Naive thymus-derived CD4-positive, alpha-beta T cell (primary cell): ENCODE measurements at regions of chr19 and their contacts with region 1.

Region 1: DNA sequence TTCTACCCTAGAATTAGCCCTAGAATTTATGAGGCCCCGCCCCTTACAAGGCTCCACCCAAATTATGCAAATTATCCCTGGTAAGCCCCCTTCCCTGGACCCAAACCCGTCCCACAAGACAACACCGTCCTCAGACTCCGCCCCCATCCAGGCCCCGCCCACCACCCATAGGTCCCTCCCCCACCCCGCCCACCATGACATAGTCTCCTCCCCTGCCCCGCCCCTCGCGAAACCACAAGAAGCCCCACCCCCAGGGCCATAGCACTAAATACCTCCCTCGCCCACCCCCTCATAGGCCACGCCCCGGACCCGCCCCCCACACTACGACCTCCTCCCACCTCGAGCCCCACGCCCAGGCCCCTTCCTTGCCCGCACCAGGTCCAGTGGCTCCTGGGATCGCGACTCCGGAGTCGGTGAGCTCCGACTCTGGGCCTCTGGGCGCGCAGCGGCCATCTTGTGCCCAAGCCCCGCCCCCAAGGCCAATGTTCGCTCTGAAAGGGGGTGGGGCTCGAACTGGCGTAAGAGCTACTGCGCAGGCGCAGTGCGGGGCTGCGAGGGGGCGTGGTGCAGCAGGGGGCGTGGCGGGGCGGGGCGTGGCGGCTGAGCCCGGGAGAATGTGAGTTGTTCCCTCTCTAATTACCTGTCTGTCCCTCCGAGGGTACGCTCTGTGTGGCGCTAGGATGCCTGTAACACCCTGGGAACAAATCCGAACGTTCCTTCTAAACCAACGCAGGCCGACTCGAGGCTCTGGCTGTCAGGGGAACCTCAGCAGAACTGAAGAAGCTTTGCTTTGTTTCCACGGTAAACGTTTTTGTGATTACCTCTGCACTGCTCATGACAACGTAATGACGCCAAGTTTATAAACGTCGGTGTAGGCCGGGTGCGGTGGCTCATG is at the start of gene ZNF784:
- DNase-seq: peak; percentile 89 to 99 (median 95)
- ATAC-seq: peak; percentile 90
- H3K4me3 ChIP-seq: peak within 1 kb of the TSS; percentile 76
- H3K4me3 Mint-ChIP-seq: peak within 1 kb of the TSS; percentile 78 to 96 (median 90)
- H3K27ac ChIP-seq: peak within 1 kb of the TSS; percentile 100
- H3K27ac Mint-ChIP-seq: peak within 1 kb of the TSS; percentile 89 to 99 (median 98)
- H3K4me1 ChIP-seq: peaks cover 27 to 46% of the 10 kb centered on the region in 2 donors
- H3K4me1 Mint-ChIP-seq: peaks cover 26 to 65% (median 58%) of the 10 kb centered on the region in 7 donors
- H3K27me3 ChIP-seq: no peaks in the 10 kb centered on the region
- H3K27me3 Mint-ChIP-seq: peaks cover 0 to 18% (median 0%) of the 10 kb centered on the region in 5 donors
- total RNA-seq, gene ZNF784: 5.1 to 17.1 (median 9.0) TPM

Region 2: GRCh38 chr19:55166530-55167268 is 457.7 kb before region 1 on chr19 and contains the start of gene DNAAF3:
- CTCF ChIA-PET with region 1: no interaction called
- POLR2A ChIA-PET with region 1: interaction called, 3 read pairs
- intact Hi-C with region 1: loop called in 1 of 2 experiments (anchors 10 kb)
- DNase-seq: peak in 8 of 9 donors; percentile 37 to 82 (median 60)
- ATAC-seq: peak; percentile 92
- H3K4me3 ChIP-seq: no peak within 1 kb of the TSS
- H3K4me3 Mint-ChIP-seq: peak within 1 kb of the TSS; percentile 41 to 89 (median 70)
- H3K27ac ChIP-seq: no peak within 1 kb of the TSS
- H3K27ac Mint-ChIP-seq: peak within 1 kb of the TSS in 6 of 9 donors; percentile 32 to 88 (median 70)
- H3K4me1 ChIP-seq: peaks cover 0 to 7% of the 10 kb centered on the region in 2 donors
- H3K4me1 Mint-ChIP-seq: peaks cover 10 to 17% (median 13%) of the 10 kb centered on the region in 7 donors
- H3K27me3 ChIP-seq: peaks cover 4 to 26% of the 10 kb centered on the region in 2 donors
- H3K27me3 Mint-ChIP-seq: peaks cover 61 to 70% (median 66%) of the 10 kb centered on the region in 5 donors
- total RNA-seq, gene DNAAF3: not detected

Region 3: GRCh38 chr19:55265723-55266386 is 358.5 kb before region 1 on chr19:
- CTCF ChIA-PET with region 1: no interaction called
- POLR2A ChIA-PET with region 1: no interaction called
- intact Hi-C with region 1: no loop called
- DNase-seq: no peak
- ATAC-seq: no peak
- H3K4me3 ChIP-seq: no peak overlapping the region
- H3K4me3 Mint-ChIP-seq: no peak overlapping the region
- H3K27ac ChIP-seq: no peak overlapping the region
- H3K27ac Mint-ChIP-seq: peak overlapping the region in 1 of 9 donors; percentile 84
- H3K4me1 ChIP-seq: no peaks in the 10 kb centered on the region
- H3K4me1 Mint-ChIP-seq: peaks cover 0 to 10% (median 7%) of the 10 kb centered on the region in 7 donors
- H3K27me3 ChIP-seq: no peaks in the 10 kb centered on the region
- H3K27me3 Mint-ChIP-seq: no peaks in the 10 kb centered on the region

Region 4: GRCh38 chr19:55407800-55408532 is 216.4 kb before region 1 on chr19:
- CTCF ChIA-PET with region 1: no interaction called
- POLR2A ChIA-PET with region 1: no interaction called
- intact Hi-C with region 1: loop called in 1 of 2 experiments (anchors 2 kb)
- DNase-seq: peak; percentile 94 to 99 (median 97)
- ATAC-seq: peak; percentile 93
- H3K4me3 ChIP-seq: peak overlapping the region; percentile 89
- H3K4me3 Mint-ChIP-seq: peak overlapping the region; percentile 86 to 97 (median 92)
- H3K27ac ChIP-seq: peak overlapping the region; percentile 96
- H3K27ac Mint-ChIP-seq: peak overlapping the region; percentile 93 to 100 (median 99)
- H3K4me1 ChIP-seq: peaks cover 17 to 24% of the 10 kb centered on the region in 2 donors
- H3K4me1 Mint-ChIP-seq: peaks cover 21 to 36% (median 26%) of the 10 kb centered on the region in 7 donors
- H3K27me3 ChIP-seq: no peaks in the 10 kb centered on the region
- H3K27me3 Mint-ChIP-seq: peaks cover 0 to 12% (median 0%) of the 10 kb centered on the region in 5 donors

Region 5: DNA sequence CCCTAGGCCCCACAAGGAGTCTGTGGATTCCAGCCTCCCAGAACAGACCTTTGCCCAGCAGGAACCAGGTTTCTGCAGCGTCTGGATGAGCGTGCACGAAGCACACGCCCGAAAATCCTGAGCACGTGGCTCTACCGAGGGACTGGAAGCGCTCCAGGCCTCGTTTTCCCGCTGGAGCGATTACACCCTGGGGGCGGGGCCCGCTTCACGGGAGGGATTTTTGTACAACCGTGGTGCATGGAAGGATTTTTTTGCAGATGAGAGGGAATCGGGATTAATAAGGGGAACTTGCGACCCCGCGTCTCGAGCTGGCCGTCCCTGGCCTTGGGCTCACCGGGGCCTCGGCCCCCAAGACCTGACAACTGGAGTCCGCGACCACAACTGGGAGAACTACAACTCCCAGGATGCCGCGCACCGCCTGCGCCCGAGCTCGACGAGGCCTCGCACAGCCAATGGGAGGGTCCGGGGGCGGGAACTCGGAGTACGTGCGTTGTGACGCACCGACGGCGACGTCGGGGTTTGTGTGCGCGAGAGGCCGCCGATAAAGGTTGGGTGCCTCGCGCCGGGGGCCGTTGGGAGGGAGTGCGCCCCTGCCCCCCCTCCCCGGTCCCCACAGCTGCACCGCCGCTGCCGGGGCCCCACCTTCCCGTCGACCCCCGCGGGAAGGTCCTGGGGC is 148.1 kb before region 1 on chr19 and contains the start of gene ZNF628:
- CTCF ChIA-PET with region 1: no interaction called
- POLR2A ChIA-PET with region 1: interaction called, 17 read pairs
- intact Hi-C with region 1: loop called (anchors 1 to 2 kb)
- DNase-seq: peak; percentile 88 to 98 (median 96)
- ATAC-seq: peak; percentile 96
- H3K4me3 ChIP-seq: peak within 1 kb of the TSS; percentile 96
- H3K4me3 Mint-ChIP-seq: peak within 1 kb of the TSS; percentile 83 to 93 (median 90)
- H3K27ac ChIP-seq: peak within 1 kb of the TSS; percentile 90
- H3K27ac Mint-ChIP-seq: peak within 1 kb of the TSS; percentile 81 to 95 (median 92)
- H3K4me1 ChIP-seq: peaks cover 14 to 15% of the 10 kb centered on the region in 2 donors
- H3K4me1 Mint-ChIP-seq: peaks cover 15 to 41% (median 29%) of the 10 kb centered on the region in 7 donors
- H3K27me3 ChIP-seq: no peaks in the 10 kb centered on the region
- H3K27me3 Mint-ChIP-seq: no peaks in the 10 kb centered on the region
- total RNA-seq, gene ZNF628: 6.6 to 27.2 (median 9.0) TPM

Region 6: GRCh38 chr19:55580628-55581144 is 43.7 kb before region 1 on chr19 and contains the start of gene ZNF579:
- CTCF ChIA-PET with region 1: interaction called, 3 read pairs
- POLR2A ChIA-PET with region 1: interaction called, 9 read pairs
- intact Hi-C with region 1: loop called in 1 of 2 experiments (anchors 2 kb)
- DNase-seq: peak in 8 of 9 donors; percentile 50 to 82 (median 64)
- ATAC-seq: peak; percentile 86
- H3K4me3 ChIP-seq: peak within 1 kb of the TSS; percentile 82
- H3K4me3 Mint-ChIP-seq: peak within 1 kb of the TSS; percentile 85 to 92 (median 88)
- H3K27ac ChIP-seq: peak within 1 kb of the TSS; percentile 87
- H3K27ac Mint-ChIP-seq: peak within 1 kb of the TSS; percentile 76 to 96 (median 88)
- H3K4me1 ChIP-seq: peaks cover 8 to 16% of the 10 kb centered on the region in 2 donors
- H3K4me1 Mint-ChIP-seq: peaks cover 21 to 35% (median 29%) of the 10 kb centered on the region in 7 donors
- H3K27me3 ChIP-seq: no peaks in the 10 kb centered on the region
- H3K27me3 Mint-ChIP-seq: peaks cover 0 to 16% (median 0%) of the 10 kb centered on the region in 5 donors
- total RNA-seq, gene ZNF579: 6.1 to 11.0 (median 7.8) TPM

Region 7: GRCh38 chr19:55605207-55605636 is 19.1 kb before region 1 on chr19:
- CTCF ChIA-PET with region 1: interaction called, 42 read pairs
- POLR2A ChIA-PET with region 1: interaction called, 76 read pairs
- intact Hi-C with region 1: loop called (anchors 1 kb)
- DNase-seq: peak; percentile 90 to 99 (median 97)
- ATAC-seq: peak; percentile 87
- H3K4me3 ChIP-seq: peak overlapping the region; percentile 51
- H3K4me3 Mint-ChIP-seq: peak overlapping the region; percentile 78 to 98 (median 90)
- H3K27ac ChIP-seq: peak overlapping the region; percentile 90
- H3K27ac Mint-ChIP-seq: peak overlapping the region; percentile 77 to 96 (median 91)
- H3K4me1 ChIP-seq: peaks cover 7 to 18% of the 10 kb centered on the region in 2 donors
- H3K4me1 Mint-ChIP-seq: peaks cover 37 to 70% (median 64%) of the 10 kb centered on the region in 7 donors
- H3K27me3 ChIP-seq: no peaks in the 10 kb centered on the region
- H3K27me3 Mint-ChIP-seq: peaks cover 0 to 3% (median 0%) of the 10 kb centered on the region in 5 donors

Region 8: DNA sequence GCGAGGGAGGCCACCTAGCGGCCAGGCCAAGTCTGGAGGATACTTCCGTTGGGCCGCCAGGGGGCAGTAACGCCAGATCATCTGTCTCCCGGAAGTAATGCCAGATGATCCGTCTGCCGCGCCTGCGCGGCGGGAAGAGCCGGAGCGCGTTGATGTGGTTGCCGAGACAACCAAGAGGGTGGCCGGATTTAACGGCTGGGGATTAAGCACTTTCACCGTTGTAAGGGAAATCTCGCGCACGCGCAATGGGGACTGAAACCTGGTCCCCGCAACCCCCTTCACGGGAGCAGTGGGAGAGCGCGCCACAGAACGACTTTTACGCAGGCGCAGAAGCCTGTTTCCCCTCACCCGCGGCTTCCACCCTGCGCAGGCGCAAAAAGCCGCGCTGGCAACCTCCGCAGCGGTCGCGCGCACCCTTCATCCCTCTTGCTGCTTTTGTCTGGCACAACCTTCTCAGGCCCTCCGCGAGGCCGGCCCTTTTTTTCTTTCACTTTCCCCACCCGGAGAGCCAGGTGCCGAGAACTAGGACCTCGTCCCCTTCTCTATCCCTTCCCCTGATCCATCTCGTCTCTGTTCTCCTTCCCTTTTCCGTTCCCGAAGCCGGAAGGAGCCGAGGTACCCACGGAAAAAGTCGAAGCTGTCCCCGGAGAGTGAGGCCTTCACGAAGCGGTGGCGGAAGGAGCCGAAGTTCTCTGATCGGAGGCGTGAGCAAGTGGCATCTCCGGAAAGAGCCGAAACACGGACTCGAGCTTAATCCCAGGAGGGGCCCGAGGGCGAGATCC is 29.6 kb after region 1 on chr19:
- CTCF ChIA-PET with region 1: interaction called, 8 read pairs
- POLR2A ChIA-PET with region 1: interaction called, 12 read pairs
- intact Hi-C with region 1: loop called (anchors 1 to 2 kb)
- DNase-seq: peak; percentile 95 to 100 (median 100)
- ATAC-seq: peak; percentile 83
- H3K4me3 ChIP-seq: peak overlapping the region; percentile 98
- H3K4me3 Mint-ChIP-seq: peak overlapping the region; percentile 83 to 99 (median 96)
- H3K27ac ChIP-seq: peak overlapping the region; percentile 99
- H3K27ac Mint-ChIP-seq: peak overlapping the region; percentile 95 to 100 (median 99)
- H3K4me1 ChIP-seq: peaks cover 30 to 36% of the 10 kb centered on the region in 2 donors
- H3K4me1 Mint-ChIP-seq: peaks cover 29 to 55% (median 39%) of the 10 kb centered on the region in 7 donors
- H3K27me3 ChIP-seq: no peaks in the 10 kb centered on the region
- H3K27me3 Mint-ChIP-seq: peaks cover 0 to 2% (median 0%) of the 10 kb centered on the region in 5 donors

Region 9: GRCh38 chr19:55663846-55664536 is 39.6 kb after region 1 on chr19:
- CTCF ChIA-PET with region 1: no interaction called
- POLR2A ChIA-PET with region 1: no interaction called
- intact Hi-C with region 1: no loop called
- DNase-seq: no peak
- ATAC-seq: no peak
- H3K4me3 ChIP-seq: no peak overlapping the region
- H3K4me3 Mint-ChIP-seq: no peak overlapping the region
- H3K27ac ChIP-seq: no peak overlapping the region
- H3K27ac Mint-ChIP-seq: peak overlapping the region in 3 of 9 donors; percentile 1 to 72 (median 55)
- H3K4me1 ChIP-seq: peaks cover under 1 to 16% of the 10 kb centered on the region in 2 donors
- H3K4me1 Mint-ChIP-seq: peaks cover 10 to 61% (median 36%) of the 10 kb centered on the region in 7 donors
- H3K27me3 ChIP-seq: no peaks in the 10 kb centered on the region
- H3K27me3 Mint-ChIP-seq: no peaks in the 10 kb centered on the region